Endothelial cell of umbilical vein (primary cell): ENCODE measurements at regions of chr13 and their contacts with region 1.

Region 1: DNA sequence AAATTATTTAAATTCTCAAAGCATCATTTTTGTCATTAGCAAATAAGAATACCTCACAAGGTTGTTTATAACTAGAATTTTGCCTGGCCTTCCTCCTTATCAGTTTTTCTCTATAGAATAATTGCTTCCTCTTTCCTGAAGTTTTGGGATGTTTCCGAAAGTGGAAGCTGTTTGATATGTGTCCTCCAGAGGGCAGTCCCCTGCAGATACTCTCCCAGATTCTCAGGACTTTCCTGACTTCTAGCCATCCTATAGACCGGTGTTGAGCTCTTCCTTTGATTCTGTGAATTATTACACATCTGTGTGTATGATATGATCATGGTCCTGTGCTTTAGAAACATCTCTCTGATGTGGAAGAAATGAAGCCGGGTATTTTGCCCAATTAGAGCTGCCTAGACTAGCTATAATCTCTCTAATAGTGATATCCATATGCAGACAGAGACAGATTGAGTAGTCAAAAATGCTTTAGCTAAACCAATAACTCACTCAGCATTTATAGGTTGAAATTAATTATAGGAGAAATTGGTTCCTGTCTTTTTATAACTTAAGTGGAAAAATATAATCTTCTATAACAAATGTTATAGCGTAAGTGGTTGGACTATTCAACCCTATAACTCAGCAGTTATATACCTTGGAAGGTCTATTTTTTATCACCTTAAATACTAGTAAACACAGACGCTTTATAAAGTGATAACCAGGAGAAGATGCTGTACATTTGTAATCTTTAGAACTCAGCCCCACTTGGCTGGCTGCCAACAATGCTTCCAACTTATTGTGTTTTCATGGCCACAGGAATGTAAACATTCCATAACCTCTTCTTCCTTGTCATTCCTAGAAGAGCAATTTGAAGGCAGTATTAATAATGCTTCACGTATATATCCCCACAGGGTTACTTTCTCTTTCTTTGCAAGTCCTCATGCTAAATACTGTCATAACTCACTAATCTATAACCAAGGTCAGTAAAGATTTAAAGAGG is 201.0 kb upstream of the RXFP2 start:
- DNase-seq: peak; percentile 49
- H3K4me3 ChIP-seq: no peak overlapping the region
- H3K27ac ChIP-seq: no peak overlapping the region
- H3K4me1 ChIP-seq: peaks cover 5% of the 10 kb centered on the region
- H3K27me3 ChIP-seq: peaks cover 5 to 14% of the 10 kb centered on the region in 2 experiments
- CTCF ChIP-seq: peak; percentile 58 to 63
- POLR2A ChIP-seq: no peak

Region 2: DNA sequence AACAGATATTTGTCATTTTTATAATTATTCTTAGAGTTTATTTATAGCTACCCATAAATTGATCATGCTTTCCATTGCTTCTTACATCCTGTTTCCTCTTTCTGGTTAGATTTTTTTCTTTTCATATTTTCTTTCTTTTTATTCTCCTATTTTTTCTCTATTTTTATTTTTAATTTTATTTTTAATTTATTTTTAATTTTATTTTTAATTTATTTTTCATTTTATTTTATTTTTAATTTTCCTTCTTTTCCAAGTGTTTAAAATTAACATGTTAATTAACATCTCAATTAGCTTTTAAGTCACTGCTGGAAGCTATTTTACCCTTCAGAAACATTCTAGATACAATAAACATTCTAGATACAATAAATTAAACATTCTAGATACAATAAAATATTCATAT is 69.0 kb before region 1 on chr13:
- CTCF ChIA-PET with region 1: interaction called, 14 read pairs
- POLR2A ChIA-PET with region 1: no interaction called
- dilution Hi-C with region 1: no loop called
- intact Hi-C with region 1: no loop called
- DNase-seq: no peak
- H3K4me3 ChIP-seq: no peak overlapping the region
- H3K27ac ChIP-seq: no peak overlapping the region
- H3K4me1 ChIP-seq: no peaks in the 10 kb centered on the region
- H3K27me3 ChIP-seq: peaks cover 7 to 12% of the 10 kb centered on the region in 2 experiments
- CTCF ChIP-seq: no peak
- POLR2A ChIP-seq: no peak

Region 3: GRCh38 chr13:31638577-31638976 is 100.2 kb after region 1 on chr13:
- CTCF ChIA-PET with region 1: interaction called, 27 read pairs
- POLR2A ChIA-PET with region 1: no interaction called
- dilution Hi-C with region 1: no loop called
- intact Hi-C with region 1: loop called (anchors 1 kb)
- DNase-seq: peak; percentile 93
- H3K4me3 ChIP-seq: no peak overlapping the region
- H3K27ac ChIP-seq: peak overlapping the region; percentile 94
- H3K4me1 ChIP-seq: peaks cover 26% of the 10 kb centered on the region
- H3K27me3 ChIP-seq: no peaks in the 10 kb centered on the region
- CTCF ChIP-seq: no peak
- POLR2A ChIP-seq: no peak

Region 4: GRCh38 chr13:31717583-31717982 is 179.2 kb after region 1 on chr13:
- CTCF ChIA-PET with region 1: interaction called, 18 read pairs
- POLR2A ChIA-PET with region 1: no interaction called
- dilution Hi-C with region 1: no loop called
- intact Hi-C with region 1: no loop called
- DNase-seq: no peak
- H3K4me3 ChIP-seq: no peak overlapping the region
- H3K27ac ChIP-seq: no peak overlapping the region
- H3K4me1 ChIP-seq: no peaks in the 10 kb centered on the region
- H3K27me3 ChIP-seq: peaks cover 16 to 22% of the 10 kb centered on the region in 2 experiments
- CTCF ChIP-seq: no peak
- POLR2A ChIP-seq: no peak

Region 5: DNA sequence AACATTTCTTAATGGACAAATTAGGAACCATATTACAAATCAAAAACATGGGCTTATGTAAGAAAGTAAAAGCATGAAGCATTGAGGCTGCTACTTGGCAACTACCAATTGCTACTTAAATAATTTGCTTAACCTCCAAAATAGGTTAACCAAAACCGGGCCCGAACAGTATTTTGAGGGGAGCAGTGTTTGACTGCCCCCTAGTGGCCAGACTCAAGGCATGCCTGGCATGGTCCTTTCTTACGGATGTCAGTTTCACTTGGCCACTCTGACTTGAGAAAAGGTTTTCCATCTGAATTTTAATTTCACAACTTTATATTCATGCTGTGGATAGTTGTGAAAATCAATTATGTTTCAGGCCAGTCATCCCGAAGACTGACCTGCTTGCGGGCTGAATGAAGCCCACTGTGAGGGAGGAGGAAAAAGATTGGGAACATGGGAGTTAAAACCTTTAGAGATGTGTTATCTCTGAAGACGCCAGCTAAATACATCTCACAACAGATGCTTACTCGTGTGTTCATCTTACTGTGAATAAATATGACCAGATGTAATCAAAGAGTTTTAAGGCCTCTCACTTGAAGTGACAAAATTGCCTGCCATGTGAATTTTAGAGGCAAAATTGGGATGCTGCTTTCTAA is 203.9 kb after region 1 on chr13:
- CTCF ChIA-PET with region 1: interaction called, 244 read pairs
- POLR2A ChIA-PET with region 1: no interaction called
- dilution Hi-C with region 1: no loop called
- intact Hi-C with region 1: loop called (anchors 1 kb)
- DNase-seq: peak; percentile 64
- H3K4me3 ChIP-seq: no peak overlapping the region
- H3K27ac ChIP-seq: no peak overlapping the region
- H3K4me1 ChIP-seq: no peaks in the 10 kb centered on the region
- H3K27me3 ChIP-seq: peaks cover 0 to 2% of the 10 kb centered on the region in 2 experiments
- CTCF ChIP-seq: peak; percentile 88 to 95
- POLR2A ChIP-seq: no peak